A549 (cell line): ENCODE measurements at regions of chr14 and their contacts with region 1.

Region 1: DNA sequence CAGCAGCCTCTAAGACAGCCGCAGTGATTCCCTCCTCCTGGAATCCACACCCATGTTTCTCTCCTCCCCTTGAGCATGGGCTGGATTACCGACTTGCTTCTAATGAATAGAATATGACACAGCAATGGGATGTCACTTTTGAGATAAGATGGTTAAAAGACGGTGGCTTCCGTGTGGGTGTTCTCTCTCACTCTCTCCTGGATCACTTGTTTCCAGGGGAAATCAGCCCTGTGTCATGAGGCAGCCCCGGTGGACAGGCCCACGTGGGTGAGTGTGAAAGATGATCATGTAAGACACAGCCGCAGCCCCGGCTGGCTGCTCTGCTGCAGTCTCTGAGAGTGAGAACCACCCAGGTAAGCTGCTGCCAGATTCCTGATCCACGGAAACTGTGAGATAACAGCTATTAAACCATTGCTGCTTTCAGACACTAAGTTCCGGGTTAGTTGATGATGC is 10.7 kb downstream of the MOAP1 start:
- DNase-seq: no peak
- ATAC-seq: peak; percentile 35 to 55; a peak in 3 of 6 replicates
- H3K4me3 ChIP-seq: no peak overlapping the region
- H3K27ac ChIP-seq: no peak overlapping the region
- H3K4me1 ChIP-seq: peaks cover 7% of the 10 kb centered on the region; the same call in 1 of the 3 replicates
- CTCF ChIP-seq: no peak
- EP300 ChIP-seq: no peak
- POLR2A ChIP-seq: no peak
- RAD21 ChIP-seq: no peak

Region 2: GRCh38 chr14:93056166-93056839 is 117.7 kb before region 1 on chr14:
- CTCF ChIA-PET with region 1: no interaction called
- POLR2A ChIA-PET with region 1: no interaction called
- DNase-seq: peak in 1 of 2 experiments; percentile 49
- ATAC-seq: peak in 1 of 2 experiments; percentile 48; a peak in 4 of 6 replicates
- H3K4me3 ChIP-seq: no peak overlapping the region
- H3K27ac ChIP-seq: peak overlapping the region; percentile 55 to 78
- H3K4me1 ChIP-seq: peaks cover 50% of the 10 kb centered on the region
- CTCF ChIP-seq: no peak
- EP300 ChIP-seq: no peak
- POLR2A ChIP-seq: no peak
- RAD21 ChIP-seq: no peak

Region 3: DNA sequence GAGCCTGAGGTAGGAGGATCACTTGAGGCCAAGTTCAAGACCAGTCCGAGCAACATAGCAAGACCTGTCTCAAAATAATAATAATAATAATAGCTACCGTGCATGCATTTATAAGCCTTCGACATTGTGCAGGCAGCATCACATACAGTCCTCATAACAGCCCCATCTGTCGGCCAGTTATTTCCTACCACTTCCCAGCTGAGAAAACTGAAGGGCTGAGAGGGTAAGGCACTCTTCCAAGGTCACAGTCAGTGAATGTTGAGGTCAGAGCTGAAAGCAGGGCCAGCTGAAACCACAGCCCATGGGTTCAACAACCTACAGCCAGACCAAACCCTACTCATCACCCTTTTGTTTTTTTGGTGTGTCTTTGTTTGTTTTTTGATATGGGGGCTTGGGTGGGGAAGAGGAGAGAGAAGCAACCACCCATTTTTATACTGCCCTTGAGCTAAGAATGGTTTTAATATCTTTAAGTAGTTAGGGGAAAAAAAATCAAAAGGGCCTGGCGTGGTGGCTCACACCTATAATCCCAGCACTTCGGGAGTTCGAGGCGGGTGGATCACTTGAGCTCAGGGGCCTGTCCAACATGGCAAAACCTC is 41.4 kb before region 1 on chr14:
- CTCF ChIA-PET with region 1: interaction called, 13 read pairs
- POLR2A ChIA-PET with region 1: interaction called, 3 read pairs
- DNase-seq: peak; percentile 57 to 59
- ATAC-seq: peak; percentile 83 to 91; a peak in 5 of 6 replicates
- H3K4me3 ChIP-seq: no peak overlapping the region
- H3K27ac ChIP-seq: no peak overlapping the region
- H3K4me1 ChIP-seq: peaks cover 22% of the 10 kb centered on the region
- CTCF ChIP-seq: peak; percentile 38
- EP300 ChIP-seq: no peak
- POLR2A ChIP-seq: no peak
- RAD21 ChIP-seq: peak; percentile 25 to 42; a peak in 2 of 5 replicates

Region 4: DNA sequence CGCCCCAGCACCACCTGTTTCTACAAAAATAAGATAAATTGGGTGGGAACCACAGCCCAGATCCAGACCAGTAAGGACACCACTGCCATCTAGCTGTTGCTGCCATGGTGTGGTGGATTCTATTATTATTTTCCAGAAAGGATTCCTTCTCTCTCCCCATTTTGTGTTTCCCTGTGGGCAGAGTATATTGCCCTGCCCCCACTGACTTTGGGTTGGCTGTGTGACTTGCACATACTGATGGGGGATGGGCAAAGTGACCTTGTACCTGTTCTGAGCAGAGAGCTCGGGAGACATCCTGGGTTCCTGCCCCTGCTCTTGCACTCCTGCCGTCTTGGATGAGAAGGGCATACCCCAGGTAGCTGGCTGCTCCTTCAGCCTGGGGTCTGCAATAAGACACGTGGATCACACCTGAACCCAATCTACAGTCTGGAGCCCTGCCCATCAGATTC is 13.6 kb before region 1 on chr14:
- CTCF ChIA-PET with region 1: interaction called, 15 read pairs
- POLR2A ChIA-PET with region 1: interaction called, 3 read pairs
- DNase-seq: peak; percentile 62 to 66
- ATAC-seq: peak; percentile 89 to 91
- H3K4me3 ChIP-seq: no peak overlapping the region
- H3K27ac ChIP-seq: no peak overlapping the region
- H3K4me1 ChIP-seq: 0 out of 3 replicates have a peak, but pooled peaks cover 3% of the 10 kb centered on the region
- CTCF ChIP-seq: peak; percentile 58
- EP300 ChIP-seq: no peak
- POLR2A ChIP-seq: no peak
- RAD21 ChIP-seq: peak; percentile 62 to 67; a peak in 4 of 5 replicates

Region 5: DNA sequence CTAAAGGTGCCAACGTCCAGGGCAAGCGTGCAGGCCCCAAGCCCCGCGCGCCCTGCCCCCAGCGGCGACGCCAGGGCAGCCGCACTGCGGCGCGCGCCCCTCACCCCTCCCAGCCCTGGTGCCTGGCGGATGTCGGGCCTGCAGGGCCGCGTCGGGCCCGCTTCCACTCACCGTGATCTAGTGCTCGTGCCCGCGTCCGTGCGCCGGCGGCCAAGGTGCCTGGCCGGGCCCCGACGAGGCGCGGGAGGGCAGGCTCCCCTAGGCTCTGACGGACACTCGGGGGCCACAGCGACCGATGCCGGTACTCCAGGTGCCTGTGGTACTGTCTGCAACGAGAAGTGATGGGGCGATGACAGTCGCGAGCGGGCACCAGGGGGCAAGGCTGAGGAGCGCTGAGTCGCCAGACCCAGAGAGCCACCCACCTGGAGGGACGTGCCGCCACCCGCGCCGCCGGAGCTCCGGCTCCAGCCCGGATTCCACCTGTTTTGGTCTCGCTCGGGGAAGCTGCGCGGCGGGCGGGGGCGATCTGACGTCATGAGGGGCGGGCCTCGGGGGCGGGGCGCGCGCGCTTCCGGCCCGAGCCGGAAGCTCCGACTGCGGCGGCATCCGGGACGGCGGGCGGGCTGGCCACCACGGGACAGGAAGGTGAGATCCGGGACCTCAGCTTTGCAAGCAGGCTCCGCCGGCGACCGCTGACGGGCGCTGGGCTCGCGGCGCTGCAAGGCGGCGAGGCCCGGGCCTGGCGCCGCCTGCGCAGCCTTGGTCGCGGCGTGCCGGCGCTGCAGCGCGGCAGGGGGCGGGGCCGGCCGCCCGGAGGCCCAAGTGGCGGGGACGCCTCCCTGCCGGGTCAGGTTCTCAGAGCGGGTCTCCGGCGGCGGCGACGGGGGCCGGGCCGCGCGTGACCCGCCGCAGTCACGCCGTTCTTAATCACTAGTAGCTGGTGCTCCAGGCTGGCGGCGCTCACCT is 10.7 kb after region 1 on chr14 and contains the starts of genes LYSET and MOAP1:
- CTCF ChIA-PET with region 1: interaction called, 30 read pairs
- POLR2A ChIA-PET with region 1: no interaction called
- DNase-seq: peak; percentile 76 to 88
- ATAC-seq: peak; percentile 94
- H3K4me3 ChIP-seq: peak within 1 kb of the TSS; percentile 92
- H3K27ac ChIP-seq: peak within 1 kb of the TSS; percentile 93 to 96
- H3K4me1 ChIP-seq: peaks cover 7% of the 10 kb centered on the region
- CTCF ChIP-seq: no peak
- EP300 ChIP-seq: no peak
- POLR2A ChIP-seq: peak; percentile 67
- RAD21 ChIP-seq: no peak
- polyA plus RNA-seq, gene LYSET: 34.5 and 37.0 TPM in 2 replicates
- polyA plus RNA-seq, gene MOAP1: 18.0 and 23.9 TPM in 2 replicates

Region 6: GRCh38 chr14:93317875-93318807 is 144.2 kb after region 1 on chr14:
- CTCF ChIA-PET with region 1: no interaction called
- POLR2A ChIA-PET with region 1: no interaction called
- DNase-seq: peak; percentile 55 to 82
- ATAC-seq: peak; percentile 93 to 96
- H3K4me3 ChIP-seq: peak overlapping the region; percentile 24; the same call in 1 of the 3 replicates
- H3K27ac ChIP-seq: peak overlapping the region; percentile 72 to 78
- H3K4me1 ChIP-seq: peaks cover 47% of the 10 kb centered on the region
- CTCF ChIP-seq: no peak
- EP300 ChIP-seq: no peak
- POLR2A ChIP-seq: no peak
- RAD21 ChIP-seq: no peak

Region 7: DNA sequence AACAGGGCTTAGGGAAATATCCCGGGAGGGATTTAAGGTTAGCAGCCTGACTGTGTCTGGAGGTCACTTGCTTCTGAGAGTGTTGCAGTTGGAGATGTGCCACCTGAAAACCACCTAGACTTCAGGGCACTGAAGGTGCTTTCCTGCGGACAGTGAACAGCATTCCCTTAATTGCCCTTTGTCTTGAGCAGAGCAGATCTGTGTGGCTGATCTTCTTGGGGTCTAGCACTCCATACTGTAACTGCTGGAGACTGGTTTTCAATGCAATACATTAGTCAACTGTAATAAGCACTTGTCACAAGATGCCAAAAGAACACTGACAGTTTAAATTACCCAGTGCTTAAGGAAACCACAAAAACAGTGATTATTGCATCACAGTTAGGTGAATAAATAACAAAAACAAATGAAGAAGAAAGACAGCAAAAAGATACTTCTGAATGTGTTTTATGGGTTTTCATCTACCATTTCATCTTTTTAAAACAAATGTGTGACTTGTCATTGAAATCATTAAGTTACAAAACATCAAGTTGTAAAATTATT is 502.5 kb after region 1 on chr14:
- CTCF ChIA-PET with region 1: no interaction called
- POLR2A ChIA-PET with region 1: no interaction called
- DNase-seq: no peak
- ATAC-seq: no peak
- H3K4me3 ChIP-seq: no peak overlapping the region
- H3K27ac ChIP-seq: no peak overlapping the region
- H3K4me1 ChIP-seq: no peaks in the 10 kb centered on the region
- CTCF ChIP-seq: no peak
- EP300 ChIP-seq: no peak
- POLR2A ChIP-seq: no peak
- RAD21 ChIP-seq: no peak